K562 (cell line): ENCODE measurements at regions of chr10 and their contacts with region 1.

Region 1: GRCh38 chr10:75210282-75211006 is at the start of gene VDAC2:
- DNase-seq: peak; percentile 96 to 98 (median 98)
- ATAC-seq: peak; percentile 91
- H3K4me3 ChIP-seq: peak within 1 kb of the TSS; percentile 97
- H3K27ac ChIP-seq: peak within 1 kb of the TSS; percentile 97
- H3K4me1 ChIP-seq: peaks cover 35 to 40% of the 10 kb centered on the region in 2 experiments
- H3K27me3 ChIP-seq: no peaks in the 10 kb centered on the region
- CTCF ChIP-seq: peak in 1 of 3 experiments; percentile 7; a peak in 1 of 6 replicates
- EP300 ChIP-seq: no peak; the same call in 1 of the 2 replicates
- POLR2A ChIP-seq: peak; percentile 90
- RAD21 ChIP-seq: 0 out of 4 replicates have a peak, but pooled peaks of 1 of the 2 experiments have one; percentile 22
- polyA plus RNA-seq, gene VDAC2: 208 to 250 TPM

Region 2: GRCh38 chr10:74753442-74754211 is 456.8 kb before region 1 on chr10:
- CTCF ChIA-PET with region 1: no interaction called
- POLR2A ChIA-PET with region 1: no interaction called
- in situ Hi-C with region 1: no loop called
- intact Hi-C with region 1: no loop called
- DNase-seq: no peak
- ATAC-seq: no peak
- H3K4me3 ChIP-seq: no peak overlapping the region
- H3K27ac ChIP-seq: no peak overlapping the region
- H3K4me1 ChIP-seq: no peaks in the 10 kb centered on the region; a peak in 1 of 5 replicates
- H3K27me3 ChIP-seq: peaks cover 23 to 60% of the 10 kb centered on the region in 2 experiments
- CTCF ChIP-seq: no peak
- EP300 ChIP-seq: no peak
- POLR2A ChIP-seq: no peak
- RAD21 ChIP-seq: no peak

Region 3: DNA sequence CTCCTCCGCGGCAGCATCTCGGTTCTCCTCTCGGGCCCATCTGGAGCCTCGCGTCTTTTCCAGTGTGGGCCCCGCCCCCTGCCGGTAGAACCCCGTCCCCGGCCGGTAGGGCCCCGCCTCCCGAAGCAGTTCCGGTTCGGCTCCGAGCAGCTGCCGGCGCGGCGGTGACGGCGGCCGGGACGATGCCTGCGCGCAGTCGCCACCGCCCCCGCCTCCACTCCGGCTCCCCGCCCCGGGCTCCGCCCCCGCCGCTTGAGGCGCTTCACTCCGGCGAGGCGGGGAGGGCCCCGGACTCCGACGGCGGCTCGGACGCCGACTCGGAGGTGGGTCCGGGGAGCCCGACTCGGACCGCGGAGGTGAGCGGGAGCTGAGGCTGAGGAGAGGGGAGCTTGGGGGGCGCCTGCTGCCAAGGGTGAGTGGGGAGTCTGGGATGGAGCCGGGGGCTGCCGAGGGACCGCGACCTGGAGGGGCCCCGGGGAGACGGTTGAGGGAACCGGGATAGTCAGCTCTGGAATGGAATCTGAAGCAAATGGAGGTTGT is 99.0 kb before region 1 on chr10 and contains the start of gene SAMD8:
- CTCF ChIA-PET with region 1: no interaction called
- POLR2A ChIA-PET with region 1: interaction called, 4 read pairs
- in situ Hi-C with region 1: no loop called
- intact Hi-C with region 1: loop called (anchors 2 kb)
- DNase-seq: peak; percentile 98
- ATAC-seq: peak; percentile 82
- H3K4me3 ChIP-seq: peak within 1 kb of the TSS; percentile 89
- H3K27ac ChIP-seq: peak within 1 kb of the TSS; percentile 85
- H3K4me1 ChIP-seq: peaks cover 51 to 55% of the 10 kb centered on the region in 2 experiments
- H3K27me3 ChIP-seq: no peaks in the 10 kb centered on the region
- CTCF ChIP-seq: peak in 2 of 3 experiments; percentile 18 to 23; a peak in 2 of 6 replicates
- EP300 ChIP-seq: no peak
- POLR2A ChIP-seq: peak; percentile 81
- RAD21 ChIP-seq: no peak
- polyA plus RNA-seq, gene SAMD8: 2.7 to 2.8 TPM

Region 4: GRCh38 chr10:75187961-75188426 is 22.4 kb before region 1 on chr10:
- CTCF ChIA-PET with region 1: interaction called, 3 read pairs
- POLR2A ChIA-PET with region 1: interaction called, 74 read pairs
- in situ Hi-C with region 1: no loop called
- intact Hi-C with region 1: loop called (anchors 1 kb)
- DNase-seq: peak; percentile 46 to 85 (median 63)
- ATAC-seq: peak; percentile 79
- H3K4me3 ChIP-seq: no peak overlapping the region
- H3K27ac ChIP-seq: no peak overlapping the region
- H3K4me1 ChIP-seq: peaks cover 6 to 23% of the 10 kb centered on the region in 2 experiments; a peak in 4 of 5 replicates
- H3K27me3 ChIP-seq: no peaks in the 10 kb centered on the region
- CTCF ChIP-seq: peak; percentile 86 to 97 (median 92)
- EP300 ChIP-seq: no peak; the same call in 1 of the 2 replicates
- POLR2A ChIP-seq: no peak
- RAD21 ChIP-seq: peak; percentile 85 to 90

Region 5: DNA sequence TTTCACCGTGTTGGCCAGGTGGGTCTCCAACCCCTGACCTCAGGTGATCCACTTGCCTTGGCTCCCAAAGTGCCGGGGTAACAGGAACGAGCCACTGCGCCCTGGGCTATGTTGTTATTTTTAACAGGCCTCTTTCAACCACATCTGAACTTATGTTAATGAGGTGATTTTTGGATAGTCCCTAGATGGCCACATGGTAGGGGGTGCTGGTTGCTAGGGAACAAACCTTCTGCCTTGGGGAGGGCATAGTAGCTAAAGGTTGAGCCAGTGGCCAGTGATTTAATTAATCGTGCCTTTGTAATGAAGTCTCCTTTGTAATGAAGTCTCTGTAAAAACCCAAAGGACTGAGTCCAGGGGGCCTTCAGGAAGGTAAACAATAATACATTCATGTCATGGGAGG is 16.2 kb after region 1 on chr10:
- CTCF ChIA-PET with region 1: interaction called, 3 read pairs
- POLR2A ChIA-PET with region 1: interaction called, 41 read pairs
- in situ Hi-C with region 1: no loop called
- intact Hi-C with region 1: loop called (anchors 2 kb)
- DNase-seq: no peak
- ATAC-seq: no peak
- H3K4me3 ChIP-seq: no peak overlapping the region
- H3K27ac ChIP-seq: no peak overlapping the region
- H3K4me1 ChIP-seq: no peaks in the 10 kb centered on the region
- H3K27me3 ChIP-seq: no peaks in the 10 kb centered on the region
- CTCF ChIP-seq: no peak
- EP300 ChIP-seq: no peak
- POLR2A ChIP-seq: no peak
- RAD21 ChIP-seq: no peak